ENCODE measurements at regions of chr17 and their contacts with region 1.

Region 1: GRCh38 chr17:32909787-32910369 is 18.1 kb upstream of the TMEM98 start:
- DNase-seq: peak; percentile 83 to 86
- ATAC-seq: peak; percentile 81 to 89
- H3K4me3 ChIP-seq: no peak overlapping the region
- H3K27ac ChIP-seq: peak overlapping the region in 1 of 2 experiments; percentile 39; a peak in 1 of 6 replicates
- H3K4me1 ChIP-seq: peaks cover 7% of the 10 kb centered on the region
- CTCF ChIP-seq: peak; percentile 67
- EP300 ChIP-seq: no peak
- POLR2A ChIP-seq: no peak
- RAD21 ChIP-seq: peak; percentile 57 to 66

Region 2: GRCh38 chr17:32927724-32928585 is 18.1 kb after region 1 on chr17 and contains the start of gene TMEM98:
- CTCF ChIA-PET with region 1: interaction called, 10 read pairs
- POLR2A ChIA-PET with region 1: no interaction called
- DNase-seq: no peak
- ATAC-seq: peak; percentile 75
- H3K4me3 ChIP-seq: peak within 1 kb of the TSS; percentile 97
- H3K27ac ChIP-seq: peak within 1 kb of the TSS; percentile 91 to 95
- H3K4me1 ChIP-seq: peaks cover 9% of the 10 kb centered on the region
- CTCF ChIP-seq: no peak
- EP300 ChIP-seq: no peak
- POLR2A ChIP-seq: no peak
- RAD21 ChIP-seq: no peak
- polyA plus RNA-seq, gene TMEM98: 61.0 and 72.6 TPM in 2 replicates

Region 3: DNA sequence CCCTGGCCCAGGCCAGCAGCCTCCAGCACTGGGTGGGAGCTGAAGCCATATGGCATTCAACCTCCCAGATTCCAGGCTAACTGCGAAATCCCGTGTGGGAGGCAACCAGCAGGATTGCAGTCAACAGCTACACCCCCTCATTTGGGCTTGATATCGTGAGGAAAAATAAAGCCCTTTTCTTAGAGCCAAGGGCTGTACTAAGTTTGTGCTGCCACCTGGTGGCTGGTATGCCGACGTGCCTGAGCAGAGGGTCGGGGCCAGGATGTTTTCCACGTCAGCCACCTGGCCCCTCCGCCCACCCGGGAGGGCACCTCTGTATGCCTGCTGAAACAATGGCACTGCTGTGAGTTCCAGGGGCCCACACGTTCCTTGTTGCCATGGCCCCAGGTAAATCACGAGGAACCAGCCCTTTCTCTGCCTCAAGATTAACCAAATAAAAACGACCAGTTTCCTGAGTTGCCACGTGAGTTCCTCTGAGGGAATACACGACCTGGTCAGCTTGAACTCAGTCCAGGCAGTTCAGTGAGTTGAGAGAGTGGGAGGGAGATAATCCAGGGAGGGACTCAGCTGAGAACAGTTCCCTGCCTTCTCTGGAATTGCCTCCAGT is 27.1 kb after region 1 on chr17:
- CTCF ChIA-PET with region 1: interaction called, 11 read pairs
- POLR2A ChIA-PET with region 1: no interaction called
- DNase-seq: peak; percentile 69 to 78
- ATAC-seq: peak; percentile 79 to 95
- H3K4me3 ChIP-seq: no peak overlapping the region
- H3K27ac ChIP-seq: no peak overlapping the region
- H3K4me1 ChIP-seq: no peaks in the 10 kb centered on the region
- CTCF ChIP-seq: peak; percentile 85
- EP300 ChIP-seq: no peak
- POLR2A ChIP-seq: no peak
- RAD21 ChIP-seq: peak; percentile 52 to 54

Region 4: GRCh38 chr17:33451221-33451620 is 541.3 kb after region 1 on chr17:
- CTCF ChIA-PET with region 1: no interaction called
- POLR2A ChIA-PET with region 1: no interaction called
- DNase-seq: no peak
- ATAC-seq: no peak
- H3K4me3 ChIP-seq: no peak overlapping the region
- H3K27ac ChIP-seq: no peak overlapping the region
- H3K4me1 ChIP-seq: no peaks in the 10 kb centered on the region
- CTCF ChIP-seq: no peak
- EP300 ChIP-seq: no peak
- POLR2A ChIP-seq: no peak
- RAD21 ChIP-seq: no peak

Measured in A549 (cell line).